ENCODE measurements at regions of chr6 and their contacts with region 1.

Region 1: GRCh38 chr6:63635588-63636517 is at the start of gene PHF3:
- DNase-seq: peak; percentile 90 to 95 (median 92)
- ATAC-seq: peak; percentile 88 to 98 (median 96)
- H3K4me3 ChIP-seq: peak within 1 kb of the TSS; percentile 76 to 97 (median 92)
- H3K27ac ChIP-seq: peak within 1 kb of the TSS; percentile 89 to 98 (median 96)
- H3K4me1 ChIP-seq: peaks cover 6 to 50% (median 41%) of the 10 kb centered on the region in 12 donors
- H3K27me3 ChIP-seq: no peaks in the 10 kb centered on the region
- CTCF ChIP-seq: peak in 5 of 12 donors; percentile 11 to 32 (median 22)
- POLR2A ChIP-seq: peak in 1 of 2 donors; percentile 39
- total RNA-seq, gene PHF3: 27.3 to 53.5 (median 34.4) TPM

Region 2: GRCh38 chr6:63598049-63599036 is 37.5 kb before region 1 on chr6:
- intact Hi-C with region 1: loop called in 3 of 10 experiments (anchors 2 to 5 kb)
- DNase-seq: peak; percentile 57 to 66 (median 59)
- ATAC-seq: peak; percentile 87 to 97 (median 92)
- H3K4me3 ChIP-seq: peak overlapping the region; percentile 33 to 63 (median 50)
- H3K27ac ChIP-seq: no peak overlapping the region
- H3K4me1 ChIP-seq: peaks cover 0 to 9% (median 0%) of the 10 kb centered on the region in 12 donors
- H3K27me3 ChIP-seq: peaks cover 0 to 3% (median 0%) of the 10 kb centered on the region in 9 donors
- CTCF ChIP-seq: peak; percentile 69 to 95 (median 82)
- POLR2A ChIP-seq: no peak

Region 3: GRCh38 chr6:63677282-63677681 is 41.4 kb after region 1 on chr6:
- intact Hi-C with region 1: loop called in 2 of 10 experiments (anchors 5 to 10 kb)
- DNase-seq: no peak
- ATAC-seq: peak in 2 of 4 donors; percentile 20 to 56
- H3K4me3 ChIP-seq: no peak overlapping the region
- H3K27ac ChIP-seq: no peak overlapping the region
- H3K4me1 ChIP-seq: peaks cover 0 to 61% (median 39%) of the 10 kb centered on the region in 12 donors
- H3K27me3 ChIP-seq: no peaks in the 10 kb centered on the region
- CTCF ChIP-seq: no peak
- POLR2A ChIP-seq: no peak

Region 4: GRCh38 chr6:63685446-63686379 is 49.9 kb after region 1 on chr6:
- intact Hi-C with region 1: loop called in 1 of 10 experiments (anchors 10 kb)
- DNase-seq: no peak
- ATAC-seq: no peak
- H3K4me3 ChIP-seq: no peak overlapping the region
- H3K27ac ChIP-seq: peak overlapping the region in 1 of 12 donors; percentile 51
- H3K4me1 ChIP-seq: peaks cover 0 to 18% (median 8%) of the 10 kb centered on the region in 12 donors
- H3K27me3 ChIP-seq: no peaks in the 10 kb centered on the region
- CTCF ChIP-seq: no peak
- POLR2A ChIP-seq: no peak

Region 5: DNA sequence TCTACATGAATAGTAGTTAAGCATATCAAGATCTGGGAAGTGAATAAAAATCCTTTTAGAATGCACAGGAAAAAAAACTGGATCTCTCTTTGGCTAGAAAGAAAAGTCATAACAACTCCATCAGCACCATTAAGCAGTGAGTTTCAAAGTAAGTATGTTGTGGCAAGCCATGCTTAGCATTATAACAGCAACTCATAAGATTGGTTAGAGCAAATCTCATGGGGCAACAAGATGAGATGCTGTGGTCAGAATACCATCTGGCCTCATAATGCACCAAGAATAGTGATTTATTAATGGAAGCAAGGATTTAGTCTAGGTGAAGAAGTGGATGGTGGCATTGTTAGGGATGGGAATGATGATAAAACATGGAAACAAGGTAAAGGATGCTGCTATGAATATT is 159.2 kb after region 1 on chr6:
- intact Hi-C with region 1: no loop called
- DNase-seq: no peak
- ATAC-seq: no peak
- H3K4me3 ChIP-seq: no peak overlapping the region
- H3K27ac ChIP-seq: no peak overlapping the region
- H3K4me1 ChIP-seq: no peaks in the 10 kb centered on the region
- H3K27me3 ChIP-seq: peaks cover 0 to 3% (median 0%) of the 10 kb centered on the region in 9 donors
- CTCF ChIP-seq: no peak
- POLR2A ChIP-seq: no peak

Region 6: GRCh38 chr6:64230530-64230929 is 594.7 kb after region 1 on chr6:
- intact Hi-C with region 1: no loop called
- DNase-seq: no peak
- ATAC-seq: no peak
- H3K4me3 ChIP-seq: no peak overlapping the region
- H3K27ac ChIP-seq: no peak overlapping the region
- H3K4me1 ChIP-seq: peaks cover 0 to 6% (median 0%) of the 10 kb centered on the region in 12 donors
- H3K27me3 ChIP-seq: no peaks in the 10 kb centered on the region
- CTCF ChIP-seq: no peak
- POLR2A ChIP-seq: no peak

Measured in heart left ventricle (tissue), 16 donors.